HCT116 (cell line): ENCODE measurements at regions of chr19 and their contacts with region 1.

Region 1: GRCh38 chr19:1672038-1672768 is 19.8 kb upstream of the TCF3 start:
- DNase-seq: no peak
- ATAC-seq: peak; percentile 71
- H3K4me3 ChIP-seq: peak overlapping the region; percentile 37 to 48
- H3K27ac ChIP-seq: peak overlapping the region; percentile 60
- H3K4me1 ChIP-seq: peaks cover 4 to 47% of the 10 kb centered on the region in 2 experiments; a peak in 3 of 4 replicates
- H3K27me3 ChIP-seq: no peaks in the 10 kb centered on the region
- CTCF ChIP-seq: peak; percentile 67 to 97 (median 83)
- POLR2A ChIP-seq: no peak
- RAD21 ChIP-seq: peak; percentile 96

Region 2: GRCh38 chr19:1551068-1552040 is 120.8 kb before region 1 on chr19:
- CTCF ChIA-PET with region 1: interaction called, 38 read pairs
- POLR2A ChIA-PET with region 1: interaction called, 3 read pairs
- RAD21 ChIA-PET with region 1: interaction called, 8 to 9 read pairs
- intact Hi-C with region 1: loop called (anchors 1 kb)
- DNase-seq: no peak
- ATAC-seq: no peak
- H3K4me3 ChIP-seq: no peak overlapping the region
- H3K27ac ChIP-seq: no peak overlapping the region
- H3K4me1 ChIP-seq: peaks cover 8 to 15% of the 10 kb centered on the region in 2 experiments
- H3K27me3 ChIP-seq: no peaks in the 10 kb centered on the region
- CTCF ChIP-seq: no peak
- POLR2A ChIP-seq: no peak
- RAD21 ChIP-seq: no peak

Region 3: DNA sequence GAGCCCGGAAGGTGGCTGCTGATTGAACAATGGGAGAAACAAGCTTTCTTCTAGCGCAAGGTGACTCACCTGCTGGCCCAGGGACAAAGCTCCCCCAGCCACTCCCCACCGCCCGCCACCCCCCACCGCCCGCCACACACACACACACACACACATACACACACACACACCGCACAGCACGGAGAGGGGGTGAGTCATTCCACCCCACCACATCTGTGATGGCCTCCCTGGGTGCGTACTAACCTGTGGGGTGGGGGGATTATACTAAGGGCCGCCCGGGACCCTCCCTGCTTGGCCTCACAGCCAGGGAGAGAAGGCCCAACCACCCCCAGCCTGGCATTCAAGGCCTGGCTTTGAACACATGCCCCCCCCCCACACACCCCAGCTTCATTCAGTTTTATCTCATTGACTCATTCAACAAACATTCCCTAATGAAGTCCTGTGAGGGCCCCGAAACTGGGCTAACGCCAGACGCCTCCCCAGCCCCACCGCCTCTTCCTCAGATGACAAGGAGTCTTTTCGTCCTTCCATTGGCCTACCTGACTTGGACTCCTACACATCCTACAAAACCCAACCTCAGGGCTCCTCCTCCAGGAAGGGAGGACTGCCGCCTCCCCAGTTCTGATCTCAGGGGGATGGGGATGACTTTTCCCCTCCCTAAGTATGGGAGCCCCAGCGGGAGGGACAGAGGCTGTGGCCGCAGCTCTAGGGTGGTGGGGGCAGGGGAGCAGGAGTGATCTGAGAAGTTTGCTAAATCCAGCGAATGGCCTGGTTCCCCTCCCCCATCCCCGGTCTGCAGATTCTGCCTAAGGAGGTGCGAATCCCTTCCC is 75.3 kb after region 1 on chr19:
- CTCF ChIA-PET with region 1: interaction called, 11 read pairs
- POLR2A ChIA-PET with region 1: interaction called, 6 read pairs
- RAD21 ChIA-PET with region 1: interaction called in 1 of 2 experiments, 5 read pairs
- intact Hi-C with region 1: loop called (anchors 5 kb)
- DNase-seq: peak; percentile 100
- ATAC-seq: peak; percentile 77
- H3K4me3 ChIP-seq: peak overlapping the region; percentile 67 to 78
- H3K27ac ChIP-seq: peak overlapping the region; percentile 100
- H3K4me1 ChIP-seq: peaks cover 37 to 78% of the 10 kb centered on the region in 2 experiments
- H3K27me3 ChIP-seq: no peaks in the 10 kb centered on the region
- CTCF ChIP-seq: no peak
- POLR2A ChIP-seq: no peak
- RAD21 ChIP-seq: no peak

Region 4: GRCh38 chr19:1767464-1767933 is 95.3 kb after region 1 on chr19:
- CTCF ChIA-PET with region 1: interaction called, 4 read pairs
- POLR2A ChIA-PET with region 1: no interaction called
- RAD21 ChIA-PET with region 1: no interaction called
- intact Hi-C with region 1: loop called (anchors 1 kb)
- DNase-seq: no peak
- ATAC-seq: peak; percentile 68
- H3K4me3 ChIP-seq: no peak overlapping the region
- H3K27ac ChIP-seq: peak overlapping the region; percentile 44; the same call in 1 of the 2 replicates
- H3K4me1 ChIP-seq: peaks cover 14 to 67% of the 10 kb centered on the region in 2 experiments
- H3K27me3 ChIP-seq: no peaks in the 10 kb centered on the region
- CTCF ChIP-seq: peak; percentile 83 to 94 (median 85)
- POLR2A ChIP-seq: no peak
- RAD21 ChIP-seq: peak; percentile 92

Region 5: GRCh38 chr19:1794424-1795172 is 122.4 kb after region 1 on chr19:
- CTCF ChIA-PET with region 1: interaction called, 29 read pairs
- POLR2A ChIA-PET with region 1: interaction called, 3 read pairs
- RAD21 ChIA-PET with region 1: interaction called, 3 to 4 read pairs
- intact Hi-C with region 1: loop called (anchors 1 kb)
- DNase-seq: no peak
- ATAC-seq: no peak
- H3K4me3 ChIP-seq: no peak overlapping the region
- H3K27ac ChIP-seq: no peak overlapping the region; the same call in 1 of the 2 replicates
- H3K4me1 ChIP-seq: peaks cover 5 to 29% of the 10 kb centered on the region in 2 experiments
- H3K27me3 ChIP-seq: no peaks in the 10 kb centered on the region
- CTCF ChIP-seq: no peak
- POLR2A ChIP-seq: no peak
- RAD21 ChIP-seq: no peak

Region 6: DNA sequence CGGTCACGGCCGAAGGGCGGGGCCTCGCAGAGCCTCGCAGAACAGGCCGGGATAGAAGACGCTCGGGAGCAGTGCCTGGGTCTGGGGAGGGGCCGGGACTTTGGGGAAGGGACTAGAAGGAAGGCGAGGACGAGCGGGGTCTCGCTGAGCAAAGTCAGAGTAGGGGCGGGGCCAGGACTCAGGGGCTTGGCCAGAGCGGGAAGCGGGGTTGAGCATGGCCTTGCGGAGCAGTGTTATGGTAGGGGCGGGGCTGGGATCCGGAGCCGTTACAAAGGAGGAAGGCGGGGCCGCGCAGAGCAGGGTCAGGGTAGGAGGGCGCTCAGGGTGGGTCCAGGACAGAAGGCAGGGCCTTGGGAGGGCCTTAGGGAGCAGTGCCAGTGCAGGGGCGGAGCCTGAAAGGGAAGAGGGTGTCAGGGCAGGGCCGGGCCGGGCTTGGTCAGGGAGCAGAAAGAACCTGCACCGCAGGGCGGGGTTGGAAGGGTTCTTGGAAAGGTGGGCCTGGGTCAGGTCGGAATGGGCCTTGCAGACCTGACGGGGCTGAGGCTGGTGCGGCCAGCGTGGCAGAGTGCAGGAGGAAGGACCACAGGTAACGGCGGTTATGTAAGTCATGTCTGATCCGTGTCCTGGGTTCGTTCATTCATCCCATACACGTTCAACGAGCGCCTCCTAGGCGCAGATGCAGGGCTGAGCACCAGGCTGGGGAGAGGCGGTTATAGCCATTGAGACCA is 140.4 kb after region 1 on chr19:
- CTCF ChIA-PET with region 1: interaction called, 7 read pairs
- POLR2A ChIA-PET with region 1: no interaction called
- RAD21 ChIA-PET with region 1: no interaction called
- intact Hi-C with region 1: loop called (anchors 5 kb)
- DNase-seq: peak; percentile 95
- ATAC-seq: peak; percentile 86
- H3K4me3 ChIP-seq: peak overlapping the region; percentile 56 to 61
- H3K27ac ChIP-seq: peak overlapping the region; percentile 79
- H3K4me1 ChIP-seq: peaks cover 20 to 38% of the 10 kb centered on the region in 2 experiments
- H3K27me3 ChIP-seq: no peaks in the 10 kb centered on the region
- CTCF ChIP-seq: peak in 2 of 3 experiments; percentile 85 to 90; a peak in 5 of 6 replicates
- POLR2A ChIP-seq: peak; percentile 22
- RAD21 ChIP-seq: peak; percentile 96

Region 7: DNA sequence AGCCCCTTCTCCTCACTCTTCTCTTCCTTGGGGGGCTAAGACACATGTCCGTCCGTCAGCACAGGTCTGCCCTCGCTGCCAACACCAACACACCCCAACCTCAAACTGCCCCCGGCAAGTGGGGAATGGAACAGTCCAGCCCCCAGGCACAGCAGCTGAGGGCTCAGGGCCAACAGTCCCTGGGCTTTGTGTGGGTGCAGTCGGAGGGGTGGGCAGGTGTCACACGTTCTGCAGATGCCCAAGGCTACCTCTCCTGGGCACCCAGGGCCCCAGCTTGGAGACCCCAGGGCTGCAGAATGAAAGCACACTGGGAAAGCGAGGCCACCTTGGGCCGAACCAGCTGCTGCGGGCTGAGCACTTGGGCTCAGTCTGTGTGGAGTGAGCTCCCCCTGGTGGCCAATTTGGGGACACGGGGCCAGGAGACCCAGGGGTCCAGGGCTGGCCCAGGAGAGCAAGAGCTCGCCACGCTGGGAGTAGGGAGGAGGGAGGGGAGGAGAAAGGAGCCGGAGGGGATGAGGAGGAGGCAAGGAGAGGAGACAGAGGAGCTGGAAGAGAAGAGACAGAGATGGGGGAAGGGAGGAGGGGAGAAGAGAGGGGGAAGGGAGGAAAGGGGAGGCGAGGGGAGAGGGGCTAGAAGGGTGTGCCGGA is 153.8 kb after region 1 on chr19:
- CTCF ChIA-PET with region 1: interaction called, 22 read pairs
- POLR2A ChIA-PET with region 1: no interaction called
- RAD21 ChIA-PET with region 1: interaction called in 1 of 2 experiments, 5 read pairs
- intact Hi-C with region 1: no loop called
- DNase-seq: no peak
- ATAC-seq: peak; percentile 89
- H3K4me3 ChIP-seq: no peak overlapping the region
- H3K27ac ChIP-seq: no peak overlapping the region; the same call in 1 of the 2 replicates
- H3K4me1 ChIP-seq: peaks cover 4 to 7% of the 10 kb centered on the region in 2 experiments; a peak in 3 of 4 replicates
- H3K27me3 ChIP-seq: no peaks in the 10 kb centered on the region
- CTCF ChIP-seq: peak; percentile 66 to 96 (median 92); a peak in 5 of 6 replicates
- POLR2A ChIP-seq: no peak
- RAD21 ChIP-seq: peak; percentile 79